CD4-positive, alpha-beta T cell (primary cell): ENCODE measurements at regions of chr6 and their contacts with region 1.

Region 1: GRCh38 chr6:47787620-47788497 is 6.0 kb downstream of the OPN5 start:
- DNase-seq: peak; percentile 12 to 68 (median 34)
- ATAC-seq: peak; percentile 81
- H3K4me3 ChIP-seq: no peak overlapping the region
- H3K4me3 Mint-ChIP-seq: no peak overlapping the region
- H3K27ac ChIP-seq: no peak overlapping the region
- H3K27ac Mint-ChIP-seq: no peak overlapping the region
- H3K4me1 ChIP-seq: peaks cover 5% of the 10 kb centered on the region
- H3K4me1 Mint-ChIP-seq: no peaks in the 10 kb centered on the region
- H3K27me3 ChIP-seq: peaks cover 4% of the 10 kb centered on the region in 2 experiments
- H3K27me3 Mint-ChIP-seq: peaks cover 48% of the 10 kb centered on the region
- CTCF ChIP-seq: peak; percentile 80

Region 2: DNA sequence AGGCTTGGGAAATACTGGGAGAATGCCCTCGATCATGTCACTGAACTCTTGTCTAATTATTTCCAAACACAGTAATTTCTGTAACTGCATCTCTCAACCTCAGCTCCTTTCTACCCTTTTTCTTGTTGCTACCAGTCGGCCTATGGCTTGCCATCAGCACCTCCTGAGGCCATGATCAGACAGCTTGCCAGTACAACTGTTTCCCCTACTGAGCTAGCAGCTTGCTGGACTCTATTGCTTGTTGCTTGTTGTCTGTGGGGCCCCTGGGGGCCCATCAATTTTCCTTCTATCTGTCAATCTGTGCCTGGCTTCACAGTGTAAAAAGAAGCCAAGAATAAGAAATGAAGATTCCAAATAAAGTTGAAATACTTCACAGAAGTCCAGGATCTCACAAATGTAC is 117.9 kb after region 1 on chr6:
- CTCF ChIA-PET with region 1: no interaction called
- POLR2A ChIA-PET with region 1: no interaction called
- intact Hi-C with region 1: no loop called
- DNase-seq: no peak
- ATAC-seq: no peak
- H3K4me3 ChIP-seq: no peak overlapping the region
- H3K4me3 Mint-ChIP-seq: no peak overlapping the region
- H3K27ac ChIP-seq: no peak overlapping the region
- H3K27ac Mint-ChIP-seq: no peak overlapping the region
- H3K4me1 ChIP-seq: no peaks in the 10 kb centered on the region
- H3K4me1 Mint-ChIP-seq: no peaks in the 10 kb centered on the region
- H3K27me3 ChIP-seq: no peaks in the 10 kb centered on the region
- H3K27me3 Mint-ChIP-seq: no peaks in the 10 kb centered on the region
- CTCF ChIP-seq: no peak

Region 3: DNA sequence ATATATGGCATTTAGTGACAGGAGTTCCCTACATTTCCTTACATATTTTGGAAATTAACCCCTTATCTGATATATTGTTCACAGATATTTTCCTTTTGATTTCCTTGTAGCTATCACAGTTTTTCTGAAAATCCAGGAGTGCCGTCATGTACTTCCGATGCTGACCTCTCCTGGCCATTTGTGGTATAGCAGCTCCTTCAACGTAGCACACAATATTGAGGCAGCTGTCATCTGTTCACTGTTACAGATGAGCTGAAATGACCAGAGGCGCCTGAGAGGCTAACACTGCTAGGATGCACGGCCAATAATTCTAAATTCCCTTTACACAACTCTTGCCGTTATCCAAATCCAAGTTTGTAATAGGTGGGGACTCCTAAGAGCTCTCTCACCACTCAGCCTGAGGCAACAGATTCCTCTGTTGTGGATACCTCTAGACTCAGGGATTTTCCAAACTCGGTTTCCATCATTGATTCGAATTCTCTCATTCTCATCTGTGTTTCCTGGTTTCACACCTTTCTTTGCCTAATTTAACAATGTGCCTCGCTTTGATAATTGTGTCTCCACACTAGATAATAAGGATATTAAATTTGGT is 1622.2 kb after region 1 on chr6:
- CTCF ChIA-PET with region 1: interaction called, 7 read pairs
- POLR2A ChIA-PET with region 1: no interaction called
- intact Hi-C with region 1: loop called (anchors 1 to 2 kb)
- DNase-seq: peak; percentile 7 to 67 (median 42)
- ATAC-seq: peak; percentile 71
- H3K4me3 ChIP-seq: no peak overlapping the region
- H3K4me3 Mint-ChIP-seq: no peak overlapping the region
- H3K27ac ChIP-seq: no peak overlapping the region
- H3K27ac Mint-ChIP-seq: no peak overlapping the region
- H3K4me1 ChIP-seq: no peaks in the 10 kb centered on the region
- H3K4me1 Mint-ChIP-seq: no peaks in the 10 kb centered on the region
- H3K27me3 ChIP-seq: no peaks in the 10 kb centered on the region
- H3K27me3 Mint-ChIP-seq: peaks cover 13% of the 10 kb centered on the region
- CTCF ChIP-seq: peak; percentile 95